Activated naive CD4-positive, alpha-beta T cell treated with anti-CD3 and anti-CD28 coated beads, Interleukin-2, amount 10 ng/mL, durations not matched to agents 7 days and 5 days (primary cell): ENCODE measurements at regions of chr19 and their contacts with region 1.

Region 1: DNA sequence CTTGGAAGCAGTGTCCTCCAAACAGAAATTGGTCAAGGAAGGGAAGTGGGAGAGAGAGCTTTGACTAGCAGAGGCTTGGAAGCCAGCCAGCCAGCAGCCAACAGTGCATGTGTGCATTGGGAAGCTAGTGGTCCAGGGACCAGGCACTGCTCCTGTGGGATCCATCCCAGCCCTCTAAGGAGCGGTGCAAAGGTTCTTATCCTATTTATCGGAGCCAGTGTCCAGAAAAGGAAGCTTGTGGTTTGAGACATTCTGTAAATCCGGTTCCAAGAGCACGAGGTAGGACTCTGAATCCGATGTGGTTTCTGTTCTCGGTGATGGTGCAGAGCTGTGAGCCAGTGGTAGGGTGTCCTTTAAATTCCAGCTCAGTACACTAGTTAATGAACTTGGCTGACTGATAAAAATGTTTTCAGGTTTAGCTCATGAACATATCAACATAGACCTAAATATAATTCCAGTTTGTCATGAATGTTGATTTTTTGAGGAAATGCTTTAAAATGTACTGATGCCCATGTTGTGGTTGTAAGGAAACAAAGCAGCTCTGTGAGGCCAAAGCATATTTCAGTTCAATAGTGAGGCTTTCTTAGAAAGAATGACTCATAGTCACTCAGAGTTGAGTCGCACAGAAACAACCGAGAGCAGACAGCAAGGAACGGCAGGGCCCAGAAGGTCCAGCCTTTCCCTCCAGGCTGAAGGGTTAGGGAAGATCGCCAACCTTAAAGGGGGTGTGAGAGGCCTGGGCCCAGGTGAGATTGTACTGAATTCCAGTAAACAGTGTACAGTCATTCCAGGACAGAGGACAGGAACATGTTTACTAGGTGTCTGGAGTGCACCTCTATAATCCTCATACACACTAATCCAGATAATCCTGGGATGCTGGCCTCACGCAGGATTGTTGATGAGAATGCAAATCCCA is 21.5 kb upstream of the GARRE1 start:
- DNase-seq: peak; percentile 48
- H3K4me3 Mint-ChIP-seq: peak overlapping the region; percentile 46
- H3K27ac Mint-ChIP-seq: peak overlapping the region; percentile 85
- H3K4me1 Mint-ChIP-seq: peaks cover 35% of the 10 kb centered on the region
- H3K27me3 Mint-ChIP-seq: no peaks in the 10 kb centered on the region

Region 2: DNA sequence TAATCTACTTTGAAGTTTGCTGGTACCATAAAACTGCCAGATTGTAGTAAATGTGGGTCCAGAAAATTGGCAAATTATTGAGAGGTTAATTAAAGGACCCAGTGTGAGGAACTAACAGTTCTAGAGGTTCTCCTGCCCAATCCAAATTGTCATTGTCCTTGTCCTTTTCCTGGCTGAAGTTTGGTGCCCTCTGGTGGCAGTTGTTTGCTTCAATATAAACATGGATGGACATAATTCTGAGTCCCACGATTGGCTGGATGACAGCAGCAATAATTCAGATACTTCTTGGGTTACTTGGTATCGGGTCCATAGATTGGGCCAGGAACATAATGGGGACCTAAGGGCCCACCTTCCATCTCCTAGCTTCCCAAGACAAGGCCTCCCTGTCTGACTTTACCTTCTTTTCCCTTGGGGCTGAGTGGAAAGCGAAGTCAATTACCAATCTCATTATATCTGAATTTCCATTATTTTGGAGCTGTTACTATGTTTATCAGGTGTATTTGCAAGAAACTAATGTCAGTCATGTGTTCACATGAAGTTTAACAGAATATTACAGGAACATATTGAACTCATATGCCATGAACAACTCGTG is 12.3 kb before region 1 on chr19:
- CTCF ChIA-PET with region 1: interaction called, 11 read pairs
- DNase-seq: peak; percentile 75
- H3K4me3 Mint-ChIP-seq: no peak overlapping the region
- H3K27ac Mint-ChIP-seq: no peak overlapping the region
- H3K4me1 Mint-ChIP-seq: peaks cover 50% of the 10 kb centered on the region
- H3K27me3 Mint-ChIP-seq: no peaks in the 10 kb centered on the region

Region 3: GRCh38 chr19:34253699-34254551 is 21.1 kb after region 1 on chr19:
- CTCF ChIA-PET with region 1: no interaction called
- DNase-seq: peak; percentile 93
- H3K4me3 Mint-ChIP-seq: peak overlapping the region; percentile 85
- H3K27ac Mint-ChIP-seq: peak overlapping the region; percentile 91
- H3K4me1 Mint-ChIP-seq: peaks cover 32% of the 10 kb centered on the region
- H3K27me3 Mint-ChIP-seq: no peaks in the 10 kb centered on the region